ENCODE measurements at regions of chr17 and their contacts with region 1.

Region 1: GRCh38 chr17:80008383-80008840 is 27.3 kb downstream of the TBC1D16 start:
- DNase-seq: peak; percentile 83
- ATAC-seq: peak; percentile 88
- H3K4me3 ChIP-seq: no peak overlapping the region
- H3K4me3 Mint-ChIP-seq: no peak overlapping the region
- H3K27ac ChIP-seq: no peak overlapping the region
- H3K27ac Mint-ChIP-seq: no peak overlapping the region
- H3K4me1 ChIP-seq: peaks cover 3 to 11% of the 10 kb centered on the region in 2 donors
- H3K4me1 Mint-ChIP-seq: peaks cover 9% of the 10 kb centered on the region
- H3K27me3 ChIP-seq: no peaks in the 10 kb centered on the region
- H3K27me3 Mint-ChIP-seq: no peaks in the 10 kb centered on the region
- CTCF ChIP-seq: peak; percentile 94

Region 2: DNA sequence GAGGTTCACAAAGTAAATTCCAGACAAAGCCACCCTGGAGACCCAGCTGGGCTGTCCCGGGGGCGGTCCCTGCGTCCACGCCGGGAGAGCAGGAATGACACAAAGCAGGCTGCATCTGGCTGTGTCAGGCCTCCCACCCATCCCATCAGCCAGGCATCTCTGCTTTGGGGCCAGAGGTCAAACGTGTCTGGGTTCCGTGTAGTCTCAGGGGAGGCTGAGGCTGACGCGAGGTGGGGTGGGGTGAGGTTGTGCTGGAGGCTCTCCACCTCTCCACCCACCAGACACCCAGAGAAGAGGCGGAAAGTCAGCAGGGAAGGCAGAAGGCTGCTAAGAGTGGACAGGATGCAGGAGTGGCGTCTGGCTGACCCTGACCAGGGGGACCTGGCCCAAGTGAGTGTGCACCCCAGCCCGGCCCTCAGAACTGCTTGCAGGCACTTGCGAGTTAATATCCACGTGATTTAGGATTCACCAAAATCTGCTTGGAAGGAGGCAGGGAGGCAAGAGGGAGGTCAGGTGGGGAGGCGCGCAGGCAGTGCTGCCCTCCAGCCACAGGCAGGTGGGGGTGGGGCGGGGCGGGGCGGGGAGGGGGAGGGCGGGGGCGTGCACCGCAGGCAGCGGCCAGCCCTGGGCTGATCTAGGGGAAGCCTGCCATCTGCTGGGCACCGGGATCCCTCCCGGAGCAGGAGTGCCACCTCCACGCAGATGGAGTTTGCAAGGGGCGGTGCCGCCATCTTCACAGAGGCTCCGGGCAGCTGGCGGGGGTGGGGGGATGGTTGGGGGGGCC is 17.1 kb before region 1 on chr17:
- CTCF ChIA-PET with region 1: interaction called, 17 read pairs
- POLR2A ChIA-PET with region 1: no interaction called
- intact Hi-C with region 1: no loop called
- DNase-seq: peak; percentile 83
- ATAC-seq: peak; percentile 98
- H3K4me3 ChIP-seq: peak overlapping the region in 4 of 5 experiments; percentile 46 to 58 (median 57)
- H3K4me3 Mint-ChIP-seq: peak overlapping the region; percentile 72
- H3K27ac ChIP-seq: no peak overlapping the region
- H3K27ac Mint-ChIP-seq: no peak overlapping the region
- H3K4me1 ChIP-seq: peaks cover 24 to 31% of the 10 kb centered on the region in 2 donors
- H3K4me1 Mint-ChIP-seq: peaks cover 27% of the 10 kb centered on the region
- H3K27me3 ChIP-seq: peaks cover 0 to 18% (median 0%) of the 10 kb centered on the region in 4 experiments
- H3K27me3 Mint-ChIP-seq: peaks cover 5% of the 10 kb centered on the region
- CTCF ChIP-seq: peak; percentile 66

Region 3: DNA sequence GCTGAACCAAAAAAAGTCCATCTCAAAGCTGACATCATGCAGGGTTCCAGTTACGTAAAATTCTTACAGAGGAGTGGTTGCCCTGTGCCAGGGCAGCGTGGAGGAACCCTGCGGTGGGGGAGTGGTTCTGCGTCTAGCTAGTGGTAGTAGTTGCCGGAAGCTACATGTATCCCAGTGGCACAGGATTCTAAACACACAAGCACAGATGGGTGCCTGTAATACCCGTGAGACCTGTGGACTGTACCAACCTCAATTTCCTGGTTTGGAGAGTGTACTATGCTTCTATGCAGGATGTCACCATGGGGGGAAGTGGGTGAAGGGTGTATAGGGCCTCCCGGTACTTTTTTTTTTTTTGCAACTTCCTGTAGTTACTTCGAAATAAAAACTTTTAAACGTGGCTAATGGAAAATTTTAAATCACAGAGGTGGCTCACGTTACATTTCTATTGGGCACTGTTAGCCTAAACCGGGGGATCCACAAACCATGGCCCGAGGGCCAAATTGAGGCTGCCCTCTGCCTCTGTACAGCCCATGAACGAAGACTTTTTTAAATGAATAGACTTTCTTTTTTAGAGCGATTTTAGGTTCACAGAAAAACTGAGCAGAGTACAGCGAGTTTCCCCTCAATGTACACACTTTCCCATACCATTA is 11.3 kb before region 1 on chr17:
- CTCF ChIA-PET with region 1: interaction called, 20 read pairs
- POLR2A ChIA-PET with region 1: interaction called, 6 read pairs
- intact Hi-C with region 1: no loop called
- DNase-seq: peak; percentile 90
- ATAC-seq: peak; percentile 98
- H3K4me3 ChIP-seq: peak overlapping the region; percentile 1 to 45 (median 19)
- H3K4me3 Mint-ChIP-seq: peak overlapping the region; percentile 80
- H3K27ac ChIP-seq: peak overlapping the region; percentile 71 to 81
- H3K27ac Mint-ChIP-seq: peak overlapping the region; percentile 95
- H3K4me1 ChIP-seq: peaks cover 32 to 40% of the 10 kb centered on the region in 2 donors
- H3K4me1 Mint-ChIP-seq: peaks cover 41% of the 10 kb centered on the region
- H3K27me3 ChIP-seq: peaks cover 0 to 11% (median 0%) of the 10 kb centered on the region in 4 experiments
- H3K27me3 Mint-ChIP-seq: peaks cover 5% of the 10 kb centered on the region
- CTCF ChIP-seq: no peak

Region 4: DNA sequence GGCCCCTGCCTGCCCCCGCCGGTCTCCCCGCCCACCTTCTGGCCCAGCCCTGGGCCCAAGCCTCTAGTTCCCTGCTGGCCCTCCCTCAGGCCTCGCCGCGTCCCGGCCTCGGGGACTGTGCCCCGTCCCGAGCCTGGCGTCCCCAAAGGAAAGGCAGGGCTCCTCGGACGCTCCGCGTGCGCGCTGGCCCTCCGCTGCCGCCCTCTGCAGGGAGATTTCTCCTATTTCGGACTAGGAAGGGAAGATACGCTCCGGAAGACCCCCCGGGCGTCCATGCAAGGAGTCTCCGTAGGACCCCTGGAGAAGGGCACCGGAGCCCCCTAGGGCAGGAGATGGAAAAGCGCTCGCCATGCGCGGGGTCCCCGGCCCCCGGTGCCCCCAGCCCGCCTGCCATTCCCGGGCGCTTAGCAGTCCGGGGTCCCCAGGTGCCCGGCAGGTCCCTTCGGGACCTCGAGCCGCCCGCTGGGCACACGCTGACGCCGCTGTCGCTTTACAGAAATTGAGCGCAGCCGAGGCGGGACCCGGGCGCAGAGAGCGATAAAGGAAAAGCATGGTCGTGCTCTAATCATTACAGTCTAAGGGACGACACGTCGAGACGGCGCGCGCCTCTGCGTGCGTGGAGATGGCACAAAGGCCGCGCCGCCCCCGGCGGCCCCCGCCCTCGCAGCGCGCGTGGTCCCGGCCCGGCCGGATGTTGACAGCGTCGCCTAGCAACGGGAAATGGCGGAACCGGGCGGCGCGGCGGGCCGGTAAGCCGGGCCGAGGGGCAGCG is 27.7 kb after region 1 on chr17 and contains the start of gene CCDC40:
- CTCF ChIA-PET with region 1: interaction called, 14 read pairs
- POLR2A ChIA-PET with region 1: no interaction called
- intact Hi-C with region 1: no loop called
- DNase-seq: peak; percentile 93
- ATAC-seq: peak; percentile 87
- H3K4me3 ChIP-seq: peak within 1 kb of the TSS; percentile 43 to 80 (median 71)
- H3K4me3 Mint-ChIP-seq: peak within 1 kb of the TSS; percentile 87
- H3K27ac ChIP-seq: peak within 1 kb of the TSS; percentile 73 to 83
- H3K27ac Mint-ChIP-seq: peak within 1 kb of the TSS; percentile 89
- H3K4me1 ChIP-seq: peaks cover 15 to 22% of the 10 kb centered on the region in 2 donors
- H3K4me1 Mint-ChIP-seq: peaks cover 11% of the 10 kb centered on the region
- H3K27me3 ChIP-seq: peaks cover 0 to 14% (median 1%) of the 10 kb centered on the region in 4 experiments
- H3K27me3 Mint-ChIP-seq: peaks cover 10% of the 10 kb centered on the region
- CTCF ChIP-seq: no peak
- total RNA-seq, gene CCDC40: 1.9 and 3.2 TPM in 2 replicates

Region 5: GRCh38 chr17:80082403-80083135 is 74.2 kb after region 1 on chr17:
- CTCF ChIA-PET with region 1: interaction called, 7 read pairs
- POLR2A ChIA-PET with region 1: no interaction called
- intact Hi-C with region 1: loop called (anchors 5 kb)
- DNase-seq: peak; percentile 76
- ATAC-seq: peak; percentile 53
- H3K4me3 ChIP-seq: no peak overlapping the region
- H3K4me3 Mint-ChIP-seq: no peak overlapping the region
- H3K27ac ChIP-seq: no peak overlapping the region
- H3K27ac Mint-ChIP-seq: peak overlapping the region; percentile 21
- H3K4me1 ChIP-seq: peaks cover 0 to 7% of the 10 kb centered on the region in 2 donors
- H3K4me1 Mint-ChIP-seq: peaks cover 2% of the 10 kb centered on the region
- H3K27me3 ChIP-seq: peaks cover 0 to 9% (median 1%) of the 10 kb centered on the region in 4 experiments
- H3K27me3 Mint-ChIP-seq: peaks cover 9% of the 10 kb centered on the region
- CTCF ChIP-seq: peak; percentile 82

Region 6: DNA sequence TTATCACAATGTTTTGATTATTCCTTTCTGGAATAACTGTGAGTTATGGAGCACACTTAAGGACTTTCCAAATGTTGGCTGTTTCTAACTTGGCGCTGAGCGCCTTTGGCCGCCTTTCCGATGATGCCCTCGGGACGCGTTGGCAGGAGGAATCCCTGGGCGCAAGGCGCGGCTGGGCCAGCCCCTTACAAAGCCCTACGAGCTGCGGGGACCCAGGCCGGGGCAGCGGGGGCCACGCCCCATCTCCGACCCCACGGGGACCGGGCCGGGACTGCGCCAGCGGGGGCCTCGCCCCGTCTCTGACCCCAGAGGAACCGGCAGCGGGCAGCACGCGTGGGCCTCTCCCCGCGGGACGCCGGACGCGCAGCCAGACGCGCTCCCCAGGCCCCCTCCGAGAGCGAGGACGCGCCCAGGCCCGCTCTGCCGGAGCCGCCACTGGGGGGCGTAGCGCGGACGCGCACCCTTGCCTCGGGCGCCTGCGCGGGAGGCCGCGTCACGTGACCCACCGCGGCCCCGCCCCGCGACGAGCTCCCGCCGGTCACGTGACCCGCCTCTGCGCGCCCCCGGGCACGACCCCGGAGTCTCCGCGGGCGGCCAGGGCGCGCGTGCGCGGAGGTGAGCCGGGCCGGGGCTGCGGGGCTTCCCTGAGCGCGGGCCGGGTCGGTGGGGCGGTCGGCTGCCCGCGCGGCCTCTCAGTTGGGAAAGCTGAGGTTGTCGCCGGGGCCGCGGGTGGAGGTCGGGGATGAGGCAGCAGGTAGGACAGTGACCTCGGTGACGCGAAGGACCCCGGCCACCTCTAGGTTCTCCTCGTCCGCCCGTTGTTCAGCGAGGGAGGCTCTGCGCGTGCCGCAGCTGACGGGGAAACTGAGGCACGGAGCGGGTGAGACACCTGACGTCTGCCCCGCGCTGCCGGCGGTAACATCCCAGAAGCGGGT is 92.9 kb after region 1 on chr17 and contains the start of gene GAA:
- CTCF ChIA-PET with region 1: interaction called, 6 read pairs
- POLR2A ChIA-PET with region 1: no interaction called
- intact Hi-C with region 1: loop called (anchors 5 kb)
- DNase-seq: peak; percentile 93
- ATAC-seq: peak; percentile 89
- H3K4me3 ChIP-seq: peak within 1 kb of the TSS; percentile 64 to 88 (median 84)
- H3K4me3 Mint-ChIP-seq: peak within 1 kb of the TSS; percentile 90
- H3K27ac ChIP-seq: peak within 1 kb of the TSS; percentile 65 to 81
- H3K27ac Mint-ChIP-seq: peak within 1 kb of the TSS; percentile 91
- H3K4me1 ChIP-seq: peaks cover 14 to 22% of the 10 kb centered on the region in 2 donors
- H3K4me1 Mint-ChIP-seq: peaks cover 24% of the 10 kb centered on the region
- H3K27me3 ChIP-seq: peaks cover 0 to 3% (median 0%) of the 10 kb centered on the region in 4 experiments
- H3K27me3 Mint-ChIP-seq: no peaks in the 10 kb centered on the region
- CTCF ChIP-seq: peak; percentile 86
- total RNA-seq, gene GAA: 39.4 and 40.0 TPM in 2 replicates

Region 7: GRCh38 chr17:80866147-80866793 is 857.9 kb after region 1 on chr17:
- CTCF ChIA-PET with region 1: no interaction called
- POLR2A ChIA-PET with region 1: no interaction called
- intact Hi-C with region 1: no loop called
- DNase-seq: peak; percentile 71
- ATAC-seq: peak; percentile 85
- H3K4me3 ChIP-seq: no peak overlapping the region
- H3K4me3 Mint-ChIP-seq: no peak overlapping the region
- H3K27ac ChIP-seq: no peak overlapping the region
- H3K27ac Mint-ChIP-seq: no peak overlapping the region
- H3K4me1 ChIP-seq: peaks cover 6 to 10% of the 10 kb centered on the region in 2 donors
- H3K4me1 Mint-ChIP-seq: peaks cover 24% of the 10 kb centered on the region
- H3K27me3 ChIP-seq: no peaks in the 10 kb centered on the region
- H3K27me3 Mint-ChIP-seq: no peaks in the 10 kb centered on the region
- CTCF ChIP-seq: peak; percentile 75